ENCODE measurements at regions of chr1 and their contacts with region 1.

Region 1: GRCh38 chr1:78114034-78114956 is 68.5 kb downstream of the GIPC2 start:
- DNase-seq: peak in 1 of 2 donors; percentile 38
- H3K4me3 ChIP-seq: no peak overlapping the region
- H3K27ac ChIP-seq: peak overlapping the region in 1 of 2 donors; percentile 26
- H3K4me1 ChIP-seq: no peaks in the 10 kb centered on the region
- H3K27me3 ChIP-seq: no peaks in the 10 kb centered on the region
- CTCF ChIP-seq: peak in 2 of 3 donors; percentile 79 to 87
- POLR2A ChIP-seq: no peak

Region 2: DNA sequence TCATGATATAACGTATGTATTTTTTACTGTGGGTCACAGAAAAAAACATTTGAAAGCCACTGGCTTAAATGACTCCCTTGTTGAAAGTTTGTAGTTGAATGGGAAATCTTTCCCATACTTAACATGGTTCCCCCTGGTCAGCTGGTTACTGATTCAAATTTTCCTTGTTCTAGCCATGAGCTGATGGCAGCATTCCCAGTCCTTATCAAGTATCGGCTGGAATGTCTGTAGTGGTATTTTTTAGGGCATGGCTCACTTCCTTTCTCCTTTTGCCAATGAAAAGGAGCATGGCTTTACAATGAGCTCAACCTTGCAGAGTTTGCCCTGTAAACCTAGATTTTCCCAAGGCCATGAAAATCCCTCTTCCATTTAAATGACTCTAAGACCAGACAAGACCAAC is 12.8 kb before region 1 on chr1:
- intact Hi-C with region 1: no loop called
- DNase-seq: no peak
- H3K4me3 ChIP-seq: no peak overlapping the region
- H3K27ac ChIP-seq: no peak overlapping the region
- H3K4me1 ChIP-seq: no peaks in the 10 kb centered on the region
- H3K27me3 ChIP-seq: no peaks in the 10 kb centered on the region
- CTCF ChIP-seq: no peak
- POLR2A ChIP-seq: no peak

Region 3: GRCh38 chr1:78126506-78126905 is 12.2 kb after region 1 on chr1:
- intact Hi-C with region 1: loop called (anchors 1 kb)
- DNase-seq: no peak
- H3K4me3 ChIP-seq: no peak overlapping the region
- H3K27ac ChIP-seq: no peak overlapping the region
- H3K4me1 ChIP-seq: no peaks in the 10 kb centered on the region
- H3K27me3 ChIP-seq: no peaks in the 10 kb centered on the region
- CTCF ChIP-seq: no peak
- POLR2A ChIP-seq: no peak

Region 4: GRCh38 chr1:78145105-78145580 is 30.8 kb after region 1 on chr1:
- intact Hi-C with region 1: no loop called
- DNase-seq: peak in 1 of 2 donors; percentile 21
- H3K4me3 ChIP-seq: no peak overlapping the region
- H3K27ac ChIP-seq: no peak overlapping the region
- H3K4me1 ChIP-seq: no peaks in the 10 kb centered on the region
- H3K27me3 ChIP-seq: no peaks in the 10 kb centered on the region
- CTCF ChIP-seq: peak; percentile 71 to 85 (median 73)
- POLR2A ChIP-seq: no peak

Region 5: GRCh38 chr1:78156805-78157521 is 42.7 kb after region 1 on chr1:
- intact Hi-C with region 1: no loop called
- DNase-seq: no peak
- H3K4me3 ChIP-seq: no peak overlapping the region
- H3K27ac ChIP-seq: no peak overlapping the region
- H3K4me1 ChIP-seq: no peaks in the 10 kb centered on the region
- H3K27me3 ChIP-seq: no peaks in the 10 kb centered on the region
- CTCF ChIP-seq: no peak
- POLR2A ChIP-seq: no peak

Region 6: DNA sequence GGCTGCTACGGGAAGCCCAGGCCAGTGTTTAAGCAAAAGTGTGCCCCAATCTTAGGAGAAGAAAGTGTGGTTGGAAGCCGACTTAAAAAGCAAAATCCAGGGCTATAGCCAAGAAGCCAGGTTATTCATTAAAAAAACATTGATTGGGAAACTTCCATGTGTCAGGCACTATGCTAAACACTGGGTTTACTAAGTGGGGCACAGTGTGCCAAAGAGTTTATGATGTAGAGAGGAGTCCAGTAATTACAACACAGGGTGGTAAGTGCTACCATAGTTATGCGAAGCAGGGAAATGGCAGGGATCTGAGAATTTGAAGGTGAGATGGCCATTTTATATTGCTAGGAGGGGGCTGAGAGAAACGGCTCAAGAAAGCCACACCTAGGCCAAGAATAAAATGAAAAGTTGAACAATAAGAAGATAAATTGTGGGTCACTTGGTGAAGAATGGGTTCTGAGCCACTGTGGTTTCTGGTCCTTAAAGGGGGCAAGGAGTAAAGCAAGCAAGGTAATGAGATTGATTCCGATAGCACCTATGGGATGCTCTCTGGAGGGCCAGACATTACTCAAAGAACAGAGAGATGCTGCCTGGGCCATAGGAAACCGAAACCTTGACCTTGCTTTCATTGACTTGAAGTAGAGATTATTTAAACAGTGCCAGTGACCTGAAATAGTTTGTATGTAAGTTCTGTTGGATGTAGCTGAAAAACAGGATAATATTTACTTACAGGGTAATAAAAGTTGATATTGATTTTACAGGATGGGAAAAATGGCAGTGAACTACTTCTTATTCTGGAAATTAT is 109.3 kb after region 1 on chr1:
- intact Hi-C with region 1: no loop called
- DNase-seq: no peak
- H3K4me3 ChIP-seq: no peak overlapping the region
- H3K27ac ChIP-seq: no peak overlapping the region
- H3K4me1 ChIP-seq: no peaks in the 10 kb centered on the region
- H3K27me3 ChIP-seq: no peaks in the 10 kb centered on the region
- CTCF ChIP-seq: no peak
- POLR2A ChIP-seq: no peak

Measured in breast epithelium (tissue), 4 donors.